Colonic mucosa (tissue), 4 donors: ENCODE measurements at regions of chr3 and their contacts with region 1.

Region 1: DNA sequence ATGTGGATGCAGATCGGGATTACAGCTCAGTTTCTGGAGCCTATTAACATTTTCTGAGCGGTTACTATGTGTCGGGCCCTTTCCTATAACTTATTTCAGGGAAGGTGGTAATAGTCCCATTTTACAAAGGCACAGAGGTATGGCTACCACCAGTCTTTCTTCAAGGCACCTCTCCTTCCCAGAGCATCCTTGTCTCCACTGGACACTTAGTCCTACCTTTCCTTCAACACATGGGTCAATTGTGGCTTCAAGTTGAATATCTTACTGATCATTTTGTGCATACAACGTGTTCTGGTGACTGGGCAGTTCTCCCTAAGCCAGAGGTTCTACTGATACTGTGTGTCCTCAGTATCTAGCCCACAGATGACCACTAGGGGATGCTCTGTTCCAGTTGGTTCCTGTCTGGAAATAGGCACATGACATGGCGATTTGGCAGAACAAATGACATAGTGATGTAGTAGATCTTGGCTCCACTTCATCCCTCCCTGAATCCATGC is 60.7 kb upstream of the CMTM8 start:
- DNase-seq: peak; percentile 78
- H3K4me3 ChIP-seq: no peak overlapping the region
- H3K27ac ChIP-seq: no peak overlapping the region
- H3K4me1 ChIP-seq: no peaks in the 10 kb centered on the region
- H3K27me3 ChIP-seq: no peaks in the 10 kb centered on the region
- CTCF ChIP-seq: peak; percentile 73

Region 2: GRCh38 chr3:32296256-32297204 is 118.8 kb after region 1 on chr3:
- intact Hi-C with region 1: loop called (anchors 5 kb)
- DNase-seq: peak; percentile 52
- H3K4me3 ChIP-seq: no peak overlapping the region
- H3K27ac ChIP-seq: no peak overlapping the region
- H3K4me1 ChIP-seq: no peaks in the 10 kb centered on the region
- H3K27me3 ChIP-seq: no peaks in the 10 kb centered on the region
- CTCF ChIP-seq: peak; percentile 86

Region 3: DNA sequence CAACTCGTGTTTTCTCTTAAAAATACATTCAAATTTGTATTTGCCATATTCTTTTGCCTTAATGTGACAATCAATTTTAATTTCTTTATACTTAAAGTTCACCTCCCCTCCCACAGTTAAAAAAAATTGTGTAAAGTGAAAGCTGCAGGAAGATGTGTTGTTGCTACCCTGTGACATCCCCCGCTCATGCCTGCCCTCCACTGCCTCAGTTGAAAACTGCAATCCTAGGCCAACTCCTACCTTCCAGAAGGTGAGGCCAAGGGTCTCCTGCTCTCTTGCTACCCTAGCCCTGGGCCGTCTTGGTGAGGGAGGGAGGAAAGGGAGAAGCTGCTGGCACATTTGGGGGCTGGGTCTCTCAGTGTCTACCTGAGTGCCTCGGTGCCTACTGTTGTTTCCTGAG is 156.9 kb after region 1 on chr3:
- intact Hi-C with region 1: loop called (anchors 5 kb)
- DNase-seq: no peak
- H3K4me3 ChIP-seq: no peak overlapping the region
- H3K27ac ChIP-seq: no peak overlapping the region
- H3K4me1 ChIP-seq: no peaks in the 10 kb centered on the region
- H3K27me3 ChIP-seq: no peaks in the 10 kb centered on the region
- CTCF ChIP-seq: peak; percentile 15

Region 4: DNA sequence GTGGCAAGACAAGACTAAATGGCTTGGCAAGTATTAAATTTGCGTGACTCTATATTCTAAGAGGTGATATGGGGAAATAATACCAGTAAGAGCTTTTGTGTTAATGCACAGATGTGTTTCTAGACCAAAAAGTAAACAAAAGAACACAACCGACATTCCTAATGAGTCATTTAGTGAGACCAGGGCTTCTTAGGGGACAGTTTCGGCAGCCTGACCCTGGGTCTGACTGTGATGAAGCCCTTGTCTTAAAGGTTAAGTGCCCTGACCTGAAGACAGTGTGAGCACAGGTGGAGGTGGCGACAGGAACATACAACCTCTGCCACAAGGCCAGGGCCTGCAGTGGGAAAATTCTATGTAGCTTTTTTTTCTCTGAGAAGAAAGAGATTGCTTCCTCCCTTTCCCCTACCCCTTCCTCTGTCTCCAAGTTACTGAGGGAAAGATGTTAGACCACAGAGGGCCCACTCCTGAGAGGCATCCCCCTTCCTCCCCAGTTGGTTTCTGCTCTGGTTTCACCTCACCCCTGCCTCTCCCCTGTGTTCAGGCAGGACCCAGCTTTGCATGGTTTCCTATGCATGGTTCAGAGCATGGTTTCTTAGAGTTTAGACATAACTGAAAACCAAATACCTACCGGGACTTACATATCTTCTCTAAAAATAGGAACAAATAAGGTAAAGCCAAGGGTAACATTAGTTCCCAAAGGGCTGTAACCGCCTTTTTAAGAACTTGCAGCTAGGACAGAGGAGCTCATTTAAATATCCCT is 189.1 kb after region 1 on chr3:
- intact Hi-C with region 1: no loop called
- DNase-seq: no peak
- H3K4me3 ChIP-seq: no peak overlapping the region
- H3K27ac ChIP-seq: no peak overlapping the region
- H3K4me1 ChIP-seq: no peaks in the 10 kb centered on the region
- H3K27me3 ChIP-seq: no peaks in the 10 kb centered on the region
- CTCF ChIP-seq: no peak

Region 5: GRCh38 chr3:32399030-32399620 is 221.4 kb after region 1 on chr3:
- intact Hi-C with region 1: loop called (anchors 5 kb)
- DNase-seq: peak; percentile 58
- H3K4me3 ChIP-seq: no peak overlapping the region
- H3K27ac ChIP-seq: no peak overlapping the region
- H3K4me1 ChIP-seq: no peaks in the 10 kb centered on the region
- H3K27me3 ChIP-seq: no peaks in the 10 kb centered on the region
- CTCF ChIP-seq: peak; percentile 40

Region 6: DNA sequence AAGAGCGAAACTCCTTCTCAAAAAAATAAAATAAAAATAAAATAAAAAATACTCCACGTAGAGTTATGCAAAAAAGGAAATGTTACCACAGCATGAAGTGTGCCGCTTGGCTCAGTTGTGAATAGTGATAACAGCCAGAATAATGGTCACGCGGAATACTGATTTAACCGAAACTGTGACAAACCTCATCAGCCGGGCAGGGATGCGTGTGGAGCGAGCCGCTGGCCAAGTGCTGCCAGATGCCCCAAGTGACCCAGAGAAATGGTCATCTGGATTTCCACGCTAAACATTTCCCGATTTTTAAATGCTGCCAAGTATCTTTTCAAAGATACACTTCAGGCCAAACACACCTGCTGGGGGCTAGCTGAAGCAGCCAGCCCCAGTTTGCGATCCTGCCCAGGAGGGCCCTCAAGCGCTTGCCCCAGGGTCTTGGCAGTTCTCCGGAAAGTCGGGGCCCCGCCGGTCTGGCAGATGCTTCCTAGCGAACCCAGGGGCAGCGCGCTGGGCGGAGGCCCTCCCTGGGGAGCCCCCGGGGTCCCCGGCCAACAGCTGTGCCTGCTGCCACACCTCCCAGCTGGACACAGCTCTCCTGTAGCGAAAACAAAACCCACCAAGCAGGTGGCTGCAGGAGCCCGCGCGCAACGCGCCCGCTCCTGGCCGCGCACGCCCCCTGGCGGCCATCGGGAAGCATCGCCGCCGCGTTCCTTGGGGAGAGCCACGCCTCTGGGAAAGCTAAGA is 289.8 kb after region 1 on chr3:
- intact Hi-C with region 1: loop called (anchors 10 kb)
- DNase-seq: peak; percentile 74
- H3K4me3 ChIP-seq: peak overlapping the region; percentile 31
- H3K27ac ChIP-seq: no peak overlapping the region
- H3K4me1 ChIP-seq: no peaks in the 10 kb centered on the region
- H3K27me3 ChIP-seq: no peaks in the 10 kb centered on the region
- CTCF ChIP-seq: peak; percentile 98